ENCODE measurements at regions of chr6 and their contacts with region 1.

Region 1: GRCh38 chr6:71406871-71407860 is 118.6 kb downstream of the OGFRL1 start:
- DNase-seq: no peak
- ATAC-seq: no peak
- H3K4me3 ChIP-seq: no peak overlapping the region
- H3K27ac ChIP-seq: no peak overlapping the region
- H3K4me1 ChIP-seq: peaks cover 24% of the 10 kb centered on the region
- H3K27me3 ChIP-seq: no peaks in the 10 kb centered on the region; a peak in 1 of 5 replicates
- CTCF ChIP-seq: no peak
- EP300 ChIP-seq: no peak
- POLR2A ChIP-seq: no peak
- RAD21 ChIP-seq: no peak

Region 2: DNA sequence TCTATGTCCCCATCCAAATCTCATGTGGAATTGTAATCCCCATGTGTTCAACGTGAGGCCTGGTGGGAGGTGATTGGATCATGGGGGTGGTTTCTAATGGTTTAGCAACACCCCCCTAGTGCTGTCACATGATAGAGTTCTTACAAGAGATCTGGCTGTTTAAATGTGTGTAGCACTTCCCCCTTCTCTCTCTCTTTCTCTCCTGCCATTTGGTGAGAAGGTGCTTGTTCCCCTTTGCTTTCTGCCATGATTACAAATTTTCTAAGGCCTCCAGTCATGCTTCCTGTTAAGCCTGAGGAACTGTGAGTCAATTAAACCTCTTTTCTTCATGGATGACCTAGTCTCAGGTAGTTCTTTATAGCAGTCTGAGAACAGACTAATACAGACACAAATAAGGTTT is 46.9 kb after region 1 on chr6:
- CTCF ChIA-PET with region 1: no interaction called
- POLR2A ChIA-PET with region 1: no interaction called
- in situ Hi-C with region 1: no loop called
- intact Hi-C with region 1: loop called (anchors 1 kb)
- DNase-seq: no peak
- ATAC-seq: no peak
- H3K4me3 ChIP-seq: no peak overlapping the region
- H3K27ac ChIP-seq: no peak overlapping the region
- H3K4me1 ChIP-seq: no peaks in the 10 kb centered on the region
- H3K27me3 ChIP-seq: no peaks in the 10 kb centered on the region
- CTCF ChIP-seq: no peak
- EP300 ChIP-seq: no peak
- POLR2A ChIP-seq: no peak
- RAD21 ChIP-seq: no peak